ENCODE measurements at regions of chr2 and their contacts with region 1.

Region 1: DNA sequence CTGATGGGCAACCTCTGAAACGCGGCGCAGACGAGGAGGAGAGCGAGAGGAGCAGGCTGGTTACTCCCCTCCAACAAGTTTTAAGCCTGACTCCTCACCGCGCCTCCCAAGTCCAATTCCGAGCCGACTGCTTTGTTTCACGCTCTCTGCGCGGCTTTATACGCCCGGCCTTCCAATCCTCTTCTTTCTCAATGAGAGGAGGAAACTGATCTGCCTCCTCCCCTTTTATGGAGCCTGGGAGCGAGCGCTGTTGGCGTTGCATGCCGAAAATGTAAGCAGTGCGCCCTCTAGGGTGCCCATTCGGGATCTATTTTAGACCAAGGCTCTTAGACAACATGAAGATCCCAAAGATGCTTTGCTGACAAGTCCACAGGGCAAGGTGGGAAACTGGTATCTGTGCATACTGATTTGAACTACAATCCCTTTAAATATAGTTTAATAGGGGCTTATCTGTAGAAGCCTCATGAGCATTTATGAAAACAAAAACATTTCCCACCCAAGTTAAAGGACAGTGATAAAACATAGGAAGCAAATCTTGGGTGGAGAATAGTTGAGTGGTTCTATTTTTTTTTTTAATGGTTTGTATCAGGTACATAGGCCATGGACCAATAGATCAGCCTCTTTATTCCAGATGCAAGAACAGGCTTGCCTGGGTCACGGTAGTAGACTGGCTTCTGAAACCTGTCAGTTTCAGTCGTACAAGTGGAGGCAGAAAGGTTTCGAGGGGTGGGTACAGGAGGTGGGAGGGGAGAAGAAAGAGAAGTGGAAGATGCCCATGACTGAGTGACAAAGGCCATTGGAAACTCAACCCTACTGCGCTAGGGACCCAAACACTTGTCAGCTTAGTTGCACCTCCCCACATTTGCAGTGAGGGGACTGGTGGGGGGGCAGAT is at the start of gene RND3:
- ATAC-seq: peak; percentile 42 to 71 (median 64)
- H3K4me3 ChIP-seq: peak within 1 kb of the TSS; percentile 70 to 84 (median 80)
- H3K27ac ChIP-seq: peak within 1 kb of the TSS; percentile 83 to 86
- H3K4me1 ChIP-seq: peaks cover 8% of the 10 kb centered on the region in 2 donors
- total RNA-seq, gene RND3: 119 to 208 (median 165) TPM

Region 2: GRCh38 chr2:149597668-149598326 is 890.0 kb before region 1 on chr2:
- in situ Hi-C with region 1: loop called (anchors 10 to 25 kb)
- ATAC-seq: peak; percentile 80 to 97 (median 95)
- H3K4me3 ChIP-seq: peak overlapping the region; percentile 1 to 28 (median 8)
- H3K27ac ChIP-seq: peak overlapping the region; percentile 4 to 14
- H3K4me1 ChIP-seq: peaks cover 0 to 12% of the 10 kb centered on the region in 2 donors

Region 3: GRCh38 chr2:149799013-149799705 is 688.6 kb before region 1 on chr2:
- in situ Hi-C with region 1: loop called in 2 of 9 experiments (anchors 25 kb)
- ATAC-seq: peak; percentile 81 to 95 (median 92)
- H3K4me3 ChIP-seq: no peak overlapping the region
- H3K27ac ChIP-seq: no peak overlapping the region
- H3K4me1 ChIP-seq: peaks cover 12 to 32% of the 10 kb centered on the region in 2 donors

Region 4: GRCh38 chr2:149849136-149849535 is 638.6 kb before region 1 on chr2:
- in situ Hi-C with region 1: no loop called
- ATAC-seq: peak in 2 of 8 experiments; percentile 34 to 58
- H3K4me3 ChIP-seq: no peak overlapping the region
- H3K27ac ChIP-seq: peak overlapping the region in 1 of 2 donors; percentile 29
- H3K4me1 ChIP-seq: peaks cover 6 to 15% of the 10 kb centered on the region in 2 donors

Region 5: DNA sequence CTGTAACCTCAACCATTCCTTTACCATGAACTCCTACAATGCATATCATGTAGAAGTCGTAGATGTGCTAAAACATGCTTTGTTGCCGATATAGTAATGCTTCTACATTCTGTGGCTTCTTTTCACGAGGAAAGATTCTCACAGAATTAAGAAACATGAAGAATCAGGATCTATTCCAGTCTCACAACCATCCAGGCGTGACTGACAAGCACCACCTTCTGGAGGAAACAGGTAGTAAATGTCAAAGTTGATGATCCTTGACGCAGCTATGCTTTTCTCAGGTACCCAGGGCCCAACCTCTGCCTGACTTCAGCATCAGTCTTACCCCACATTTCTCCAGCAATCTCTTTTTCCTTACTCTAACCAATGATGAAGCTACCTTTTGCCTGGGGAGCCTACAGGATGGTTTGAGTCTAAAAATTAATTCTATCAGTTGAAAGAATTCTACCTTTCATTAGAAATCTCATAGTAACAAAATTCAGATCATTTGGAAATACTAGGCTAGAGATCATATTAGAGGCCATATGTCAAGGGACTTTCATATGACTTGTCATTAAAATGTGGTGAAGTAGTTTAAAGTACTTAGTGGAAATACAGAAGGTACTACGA is 123.0 kb after region 1 on chr2:
- in situ Hi-C with region 1: loop called in 1 of 9 experiments (anchors 25 kb)
- ATAC-seq: peak in 3 of 8 experiments; percentile 19 to 75 (median 38)
- H3K4me3 ChIP-seq: no peak overlapping the region
- H3K27ac ChIP-seq: no peak overlapping the region
- H3K4me1 ChIP-seq: peaks cover 0 to 7% of the 10 kb centered on the region in 2 donors

Region 6: GRCh38 chr2:151238527-151239487 is 751.0 kb after region 1 on chr2:
- in situ Hi-C with region 1: loop called in 3 of 9 experiments (anchors 25 kb)
- ATAC-seq: peak; percentile 67 to 91 (median 80)
- H3K4me3 ChIP-seq: no peak overlapping the region
- H3K27ac ChIP-seq: no peak overlapping the region
- H3K4me1 ChIP-seq: peaks cover 0 to 23% of the 10 kb centered on the region in 2 donors

Measured in motor neuron (in vitro differentiated cells).